ENCODE measurements at regions of chr12 and their contacts with region 1.

Region 1: GRCh38 chr12:6890789-6891645 is 13.6 kb upstream of the LRRC23 start:
- DNase-seq: peak; percentile 86
- ATAC-seq: peak; percentile 98
- H3K4me3 ChIP-seq: peak overlapping the region; percentile 64
- H3K27ac ChIP-seq: peak overlapping the region; percentile 97
- H3K4me1 ChIP-seq: peaks cover 12% of the 10 kb centered on the region
- H3K27me3 ChIP-seq: no peaks in the 10 kb centered on the region
- CTCF ChIP-seq: peak; percentile 71 to 96 (median 80); a peak in 5 of 6 replicates
- EP300 ChIP-seq: 0 out of 4 replicates have a peak, but pooled peaks of 1 of the 2 experiments have one; percentile 8
- POLR2A ChIP-seq: peak; percentile 72
- RAD21 ChIP-seq: 0 out of 2 replicates have a peak, but pooled peaks have one; percentile 26

Region 2: DNA sequence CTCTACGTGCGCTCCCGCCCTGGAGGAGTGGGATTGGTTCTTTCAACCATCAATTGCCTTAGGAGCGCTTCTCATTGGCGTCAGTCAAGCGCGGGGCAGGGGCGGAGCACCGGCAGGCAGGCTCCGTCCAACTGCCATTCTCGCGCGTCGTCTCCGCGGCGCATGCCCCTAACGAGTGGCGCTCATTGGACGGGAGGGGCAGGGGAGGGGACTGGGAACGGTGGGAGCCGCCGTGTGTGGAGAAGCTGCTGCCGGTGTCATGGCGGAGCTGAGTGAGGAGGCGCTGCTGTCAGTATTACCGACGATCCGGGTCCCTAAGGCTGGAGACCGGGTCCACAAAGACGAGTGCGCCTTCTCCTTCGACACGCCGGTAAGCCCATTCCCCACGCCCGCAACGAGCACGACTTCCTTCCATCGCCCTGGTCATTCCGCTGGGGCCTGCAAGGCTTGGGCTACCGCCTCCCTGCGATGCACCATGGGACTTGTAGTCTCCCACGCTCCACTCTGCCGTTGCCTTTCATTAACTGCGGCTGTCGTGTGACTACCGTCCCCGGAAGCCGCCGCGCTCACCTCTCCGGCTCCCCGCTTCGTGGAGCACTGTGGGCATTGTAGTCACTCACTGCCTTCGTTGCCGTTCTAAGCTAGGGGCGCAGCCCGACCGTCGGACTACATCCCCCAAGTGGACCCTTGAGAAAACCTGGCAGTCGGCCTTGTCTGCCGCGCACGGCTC is 38.9 kb before region 1 on chr12 and contains the start of gene USP5:
- CTCF ChIA-PET with region 1: interaction called, 22 read pairs
- POLR2A ChIA-PET with region 1: interaction called, 17 read pairs
- RAD21 ChIA-PET with region 1: interaction called, 12 read pairs
- SMC1A ChIA-PET with region 1: interaction called, 6 read pairs
- in situ Hi-C with region 1: no loop called
- intact Hi-C with region 1: loop called (anchors 1 kb)
- DNase-seq: peak; percentile 99
- ATAC-seq: peak; percentile 87
- H3K4me3 ChIP-seq: peak within 1 kb of the TSS; percentile 82
- H3K27ac ChIP-seq: peak within 1 kb of the TSS; percentile 84
- H3K4me1 ChIP-seq: peaks cover 28% of the 10 kb centered on the region
- H3K27me3 ChIP-seq: no peaks in the 10 kb centered on the region
- CTCF ChIP-seq: no peak
- EP300 ChIP-seq: no peak
- POLR2A ChIP-seq: peak; percentile 89
- RAD21 ChIP-seq: no peak
- polyA plus RNA-seq, gene USP5: 2.5 to 5.2 TPM

Region 3: DNA sequence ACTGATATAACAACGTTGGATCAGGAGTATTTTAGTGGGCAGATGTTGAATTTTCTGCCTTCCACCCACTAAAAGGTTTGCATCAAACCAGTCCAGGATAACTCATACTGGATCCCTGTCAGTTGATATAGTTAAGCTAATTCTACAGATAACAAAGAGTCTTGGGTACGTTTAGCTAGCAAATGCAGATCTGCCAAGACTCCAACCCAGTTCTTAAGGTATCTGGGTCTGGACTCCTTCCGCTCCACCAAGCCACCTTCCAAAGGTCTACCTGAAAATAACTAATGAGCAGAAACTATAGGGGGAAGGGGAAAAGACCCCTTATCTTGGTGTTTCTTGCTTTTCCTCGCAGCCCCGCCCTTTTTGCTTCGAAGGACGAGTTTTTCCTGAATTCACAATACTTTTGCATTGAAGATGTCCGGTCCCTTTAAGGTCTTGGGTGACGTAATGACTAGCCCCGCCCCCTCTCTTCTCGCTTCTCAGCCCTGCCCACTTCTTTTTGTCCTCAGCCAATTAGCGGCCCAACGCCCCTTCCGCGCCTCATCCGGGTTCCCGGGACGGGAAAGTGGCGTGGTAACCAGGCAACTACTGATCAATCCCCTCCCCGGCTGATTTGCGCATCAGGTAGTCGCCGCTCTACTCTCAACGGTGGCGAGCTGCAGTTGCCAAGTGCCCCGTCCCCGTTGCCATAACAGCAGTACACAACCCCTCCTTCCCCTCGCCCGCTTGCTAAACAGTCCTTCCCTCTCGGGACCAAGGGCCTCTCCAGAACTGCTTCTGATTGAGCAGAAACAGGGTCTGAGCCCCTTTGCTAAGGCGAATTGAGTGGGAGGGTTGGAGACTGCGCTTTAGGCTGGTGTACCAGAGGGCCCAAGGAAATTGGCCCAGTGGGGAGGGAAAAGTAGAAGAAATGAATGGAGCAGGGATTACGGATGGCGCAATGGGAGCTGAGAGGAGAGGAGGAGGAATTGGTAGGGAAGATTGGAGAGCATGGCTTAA is 13.6 kb after region 1 on chr12 and contains the start of gene LRRC23:
- CTCF ChIA-PET with region 1: interaction called, 17 read pairs
- POLR2A ChIA-PET with region 1: interaction called, 18 read pairs
- RAD21 ChIA-PET with region 1: no interaction called
- SMC1A ChIA-PET with region 1: interaction called, 5 read pairs
- in situ Hi-C with region 1: no loop called
- intact Hi-C with region 1: loop called (anchors 1 kb)
- DNase-seq: peak; percentile 87
- ATAC-seq: peak; percentile 99
- H3K4me3 ChIP-seq: peak within 1 kb of the TSS; percentile 93
- H3K27ac ChIP-seq: no peak within 1 kb of the TSS
- H3K4me1 ChIP-seq: peaks cover 7% of the 10 kb centered on the region; the same call in 1 of the 2 replicates
- H3K27me3 ChIP-seq: no peaks in the 10 kb centered on the region
- CTCF ChIP-seq: no peak
- EP300 ChIP-seq: peak in 1 of 2 experiments; percentile 38; a peak in 1 of 4 replicates
- POLR2A ChIP-seq: peak; percentile 73
- RAD21 ChIP-seq: no peak
- polyA plus RNA-seq, gene LRRC23: 1.4 to 2.5 TPM

Region 4: GRCh38 chr12:6914246-6914946 is 23.4 kb after region 1 on chr12 and contains the start of gene ENO2:
- CTCF ChIA-PET with region 1: interaction called, 10 read pairs
- POLR2A ChIA-PET with region 1: interaction called, 14 read pairs
- RAD21 ChIA-PET with region 1: interaction called, 7 read pairs
- SMC1A ChIA-PET with region 1: interaction called, 16 read pairs
- in situ Hi-C with region 1: no loop called
- intact Hi-C with region 1: no loop called
- DNase-seq: no peak
- ATAC-seq: peak; percentile 92
- H3K4me3 ChIP-seq: peak within 1 kb of the TSS; percentile 100
- H3K27ac ChIP-seq: peak within 1 kb of the TSS; percentile 59
- H3K4me1 ChIP-seq: peaks cover 8% of the 10 kb centered on the region; the same call in 1 of the 2 replicates
- H3K27me3 ChIP-seq: no peaks in the 10 kb centered on the region
- CTCF ChIP-seq: no peak
- EP300 ChIP-seq: no peak
- POLR2A ChIP-seq: peak; percentile 59
- RAD21 ChIP-seq: no peak
- polyA plus RNA-seq, gene ENO2: 37.3 to 42.1 TPM

Region 5: GRCh38 chr12:6927379-6928024 is 36.5 kb after region 1 on chr12 and contains the start of gene ATN1:
- CTCF ChIA-PET with region 1: interaction called, 19 read pairs
- POLR2A ChIA-PET with region 1: interaction called, 5 read pairs
- RAD21 ChIA-PET with region 1: interaction called, 3 read pairs
- SMC1A ChIA-PET with region 1: no interaction called
- in situ Hi-C with region 1: no loop called
- intact Hi-C with region 1: no loop called
- DNase-seq: no peak
- ATAC-seq: peak; percentile 43
- H3K4me3 ChIP-seq: peak within 1 kb of the TSS; percentile 95
- H3K27ac ChIP-seq: peak within 1 kb of the TSS; percentile 86
- H3K4me1 ChIP-seq: peaks cover 37% of the 10 kb centered on the region
- H3K27me3 ChIP-seq: no peaks in the 10 kb centered on the region
- CTCF ChIP-seq: no peak
- EP300 ChIP-seq: no peak
- POLR2A ChIP-seq: peak; percentile 79
- RAD21 ChIP-seq: no peak
- polyA plus RNA-seq, gene ATN1: 0.08 to 0.15 TPM

Region 6: DNA sequence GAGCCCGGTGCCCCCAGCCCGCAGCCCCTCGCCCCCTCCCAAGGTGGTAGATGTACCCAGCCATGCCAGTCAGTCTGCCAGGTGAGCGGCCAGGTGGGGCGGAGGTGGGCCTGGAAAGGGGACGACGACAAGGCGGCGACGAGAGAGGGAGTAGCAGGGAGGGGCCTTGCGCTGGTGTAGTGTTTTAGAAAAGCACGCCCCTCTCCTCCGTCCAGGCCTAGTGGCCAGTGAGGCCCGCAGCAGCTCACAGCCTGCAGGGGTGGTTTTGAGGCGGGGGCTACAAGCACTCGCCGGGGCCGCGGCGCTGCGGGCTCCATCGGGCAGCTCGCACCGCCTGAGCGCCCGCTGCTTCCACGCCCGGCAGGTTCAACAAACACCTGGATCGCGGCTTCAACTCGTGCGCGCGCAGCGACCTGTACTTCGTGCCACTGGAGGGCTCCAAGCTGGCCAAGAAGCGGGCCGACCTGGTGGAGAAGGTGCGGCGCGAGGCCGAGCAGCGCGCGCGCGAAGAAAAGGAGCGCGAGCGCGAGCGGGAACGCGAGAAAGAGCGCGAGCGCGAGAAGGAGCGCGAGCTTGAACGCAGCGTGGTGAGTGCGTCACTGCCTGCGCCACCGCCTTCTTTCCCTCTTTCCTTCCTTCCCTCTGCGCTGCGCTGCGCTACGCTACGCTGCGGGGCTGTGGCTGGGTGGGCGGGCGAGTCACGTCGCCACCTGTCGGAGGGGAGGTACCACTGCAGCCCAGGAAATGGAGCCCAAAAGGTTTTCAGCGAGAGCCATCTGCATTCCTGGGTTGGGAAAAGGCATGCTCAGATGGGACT is 46.7 kb after region 1 on chr12:
- CTCF ChIA-PET with region 1: interaction called, 10 read pairs
- POLR2A ChIA-PET with region 1: interaction called, 3 read pairs
- RAD21 ChIA-PET with region 1: no interaction called
- SMC1A ChIA-PET with region 1: no interaction called
- in situ Hi-C with region 1: no loop called
- intact Hi-C with region 1: no loop called
- DNase-seq: peak; percentile 90
- ATAC-seq: peak; percentile 96
- H3K4me3 ChIP-seq: peak overlapping the region; percentile 86
- H3K27ac ChIP-seq: peak overlapping the region; percentile 92
- H3K4me1 ChIP-seq: peaks cover 11% of the 10 kb centered on the region; the same call in 1 of the 2 replicates
- H3K27me3 ChIP-seq: no peaks in the 10 kb centered on the region
- CTCF ChIP-seq: peak; percentile 96 to 99 (median 97)
- EP300 ChIP-seq: no peak
- POLR2A ChIP-seq: peak; percentile 87
- RAD21 ChIP-seq: peak; percentile 35

Measured in GM12878 (cell line).